ENCODE measurements at regions of chr18 and their contacts with region 1.

Region 1: GRCh38 chr18:53056064-53056463 is 716.1 kb downstream of the DCC start:
- DNase-seq: no peak
- ATAC-seq: no peak
- H3K4me3 ChIP-seq: no peak overlapping the region
- H3K4me3 Mint-ChIP-seq: no peak overlapping the region
- H3K27ac ChIP-seq: no peak overlapping the region
- H3K27ac Mint-ChIP-seq: no peak overlapping the region
- H3K4me1 ChIP-seq: no peaks in the 10 kb centered on the region
- H3K4me1 Mint-ChIP-seq: no peaks in the 10 kb centered on the region
- H3K27me3 ChIP-seq: no peaks in the 10 kb centered on the region
- H3K27me3 Mint-ChIP-seq: no peaks in the 10 kb centered on the region
- CTCF ChIP-seq: no peak

Region 2: GRCh38 chr18:53040286-53040685 is 15.8 kb before region 1 on chr18:
- CTCF ChIA-PET with region 1: no interaction called
- POLR2A ChIA-PET with region 1: no interaction called
- intact Hi-C with region 1: no loop called
- DNase-seq: no peak
- ATAC-seq: no peak
- H3K4me3 ChIP-seq: no peak overlapping the region
- H3K4me3 Mint-ChIP-seq: no peak overlapping the region
- H3K27ac ChIP-seq: no peak overlapping the region
- H3K27ac Mint-ChIP-seq: no peak overlapping the region
- H3K4me1 ChIP-seq: no peaks in the 10 kb centered on the region
- H3K4me1 Mint-ChIP-seq: no peaks in the 10 kb centered on the region
- H3K27me3 ChIP-seq: no peaks in the 10 kb centered on the region
- H3K27me3 Mint-ChIP-seq: no peaks in the 10 kb centered on the region
- CTCF ChIP-seq: no peak

Region 3: GRCh38 chr18:53070788-53071187 is 14.7 kb after region 1 on chr18:
- CTCF ChIA-PET with region 1: no interaction called
- POLR2A ChIA-PET with region 1: no interaction called
- intact Hi-C with region 1: loop called in 1 of 2 experiments (anchors 1 kb)
- DNase-seq: no peak
- ATAC-seq: no peak
- H3K4me3 ChIP-seq: no peak overlapping the region
- H3K4me3 Mint-ChIP-seq: no peak overlapping the region
- H3K27ac ChIP-seq: no peak overlapping the region
- H3K27ac Mint-ChIP-seq: no peak overlapping the region
- H3K4me1 ChIP-seq: no peaks in the 10 kb centered on the region
- H3K4me1 Mint-ChIP-seq: no peaks in the 10 kb centered on the region
- H3K27me3 ChIP-seq: no peaks in the 10 kb centered on the region
- H3K27me3 Mint-ChIP-seq: no peaks in the 10 kb centered on the region
- CTCF ChIP-seq: no peak